ENCODE measurements at regions of chr1 and their contacts with region 1.

Region 1: DNA sequence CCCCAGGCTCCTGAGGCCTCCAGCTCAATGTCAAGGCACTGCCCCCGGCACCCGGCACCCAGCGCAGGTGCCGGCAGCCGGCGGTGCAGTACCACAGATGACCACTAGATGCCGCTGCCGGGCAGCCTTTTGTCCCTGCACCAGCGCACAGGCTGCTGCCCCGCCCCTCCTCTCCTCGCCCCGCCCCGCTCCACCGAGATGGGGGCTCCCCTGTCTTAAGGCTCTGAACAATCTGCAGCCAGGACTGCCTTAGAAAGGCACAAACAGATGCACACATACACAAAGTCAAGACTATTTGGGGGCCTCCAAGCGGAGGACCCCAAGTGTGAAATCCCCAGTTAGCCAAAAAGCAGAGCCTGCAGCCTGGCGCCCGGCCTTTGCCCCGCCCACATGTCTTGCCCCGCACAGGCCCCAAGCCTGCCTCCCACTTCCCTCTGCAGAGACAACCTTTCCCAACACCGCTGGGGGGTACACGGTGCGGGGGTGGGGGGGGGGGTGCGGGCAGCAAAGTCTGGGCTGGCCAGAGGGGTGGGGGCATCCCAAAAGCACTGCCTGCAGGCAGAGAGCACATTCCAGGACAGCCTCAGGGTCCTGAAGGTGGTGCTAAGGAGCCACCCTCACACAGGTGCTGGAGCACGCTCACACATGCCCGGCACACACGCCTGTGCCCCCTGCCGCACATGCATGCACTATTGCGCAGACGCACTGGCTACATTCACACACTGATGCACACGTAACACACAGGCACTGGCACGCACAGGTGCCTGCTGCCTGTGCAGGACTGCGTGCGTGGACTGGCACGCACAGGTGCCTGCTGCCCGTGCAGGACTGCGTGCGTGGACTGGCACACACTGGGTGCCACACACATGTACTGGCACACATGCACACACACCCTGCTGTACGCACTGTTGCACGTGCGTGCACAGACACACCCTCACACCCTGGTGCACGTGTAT is 37.1 kb downstream of the ARHGEF16 start:
- DNase-seq: peak; percentile 76 to 83 (median 78)
- H3K4me3 ChIP-seq: no peak overlapping the region
- H3K4me3 Mint-ChIP-seq: peak overlapping the region in 5 of 8 donors; percentile 9 to 70 (median 52)
- H3K27ac ChIP-seq: no peak overlapping the region
- H3K27ac Mint-ChIP-seq: peak overlapping the region in 4 of 7 donors; percentile 4 to 50 (median 30)
- H3K4me1 ChIP-seq: no peaks in the 10 kb centered on the region
- H3K4me1 Mint-ChIP-seq: peaks cover 3 to 8% (median 6%) of the 10 kb centered on the region in 4 donors
- H3K27me3 ChIP-seq: no peaks in the 10 kb centered on the region
- H3K27me3 Mint-ChIP-seq: no peaks in the 10 kb centered on the region

Region 2: DNA sequence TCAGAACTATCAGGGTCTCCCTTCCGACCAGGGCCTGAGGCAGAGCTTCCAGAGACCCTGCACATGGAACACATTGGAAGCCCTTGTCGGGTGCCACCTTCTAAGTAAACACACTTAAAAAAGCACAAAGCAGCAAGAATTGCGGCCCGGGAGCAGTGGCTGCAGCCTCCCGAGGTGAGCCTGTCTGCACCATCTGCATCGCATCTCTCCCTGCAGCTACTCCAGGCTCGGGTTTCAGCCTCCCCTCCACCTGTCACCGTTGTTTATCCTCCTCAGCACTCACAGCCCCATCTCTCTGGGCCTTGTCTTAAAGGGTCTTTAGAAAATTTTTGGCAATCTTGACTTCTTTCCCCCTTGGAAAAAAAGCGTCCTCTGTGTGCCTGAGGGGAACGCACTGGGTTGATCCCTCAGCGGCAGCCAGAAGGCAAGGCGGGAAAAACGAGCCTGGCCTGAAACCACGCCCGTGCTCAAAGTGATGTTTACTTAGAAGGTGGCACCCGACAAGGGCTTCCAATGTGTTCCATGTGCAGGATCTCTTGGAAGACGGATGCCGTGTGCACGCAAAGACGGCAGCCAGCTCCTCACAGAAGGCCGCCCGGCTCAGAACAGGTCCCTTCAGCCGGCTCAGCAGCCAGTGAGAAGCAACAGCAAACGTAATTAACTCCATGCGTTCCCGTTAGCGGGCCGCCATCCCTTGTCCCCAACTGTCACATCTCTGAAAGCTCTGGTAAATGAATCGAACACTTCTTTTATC is 132.0 kb before region 1 on chr1:
- CTCF ChIA-PET with region 1: no interaction called
- POLR2A ChIA-PET with region 1: no interaction called
- intact Hi-C with region 1: no loop called
- DNase-seq: no peak
- H3K4me3 ChIP-seq: no peak overlapping the region
- H3K4me3 Mint-ChIP-seq: no peak overlapping the region
- H3K27ac ChIP-seq: no peak overlapping the region
- H3K27ac Mint-ChIP-seq: no peak overlapping the region
- H3K4me1 ChIP-seq: no peaks in the 10 kb centered on the region
- H3K4me1 Mint-ChIP-seq: no peaks in the 10 kb centered on the region
- H3K27me3 ChIP-seq: no peaks in the 10 kb centered on the region
- H3K27me3 Mint-ChIP-seq: peaks cover 4 to 8% of the 10 kb centered on the region in 2 donors

Region 3: DNA sequence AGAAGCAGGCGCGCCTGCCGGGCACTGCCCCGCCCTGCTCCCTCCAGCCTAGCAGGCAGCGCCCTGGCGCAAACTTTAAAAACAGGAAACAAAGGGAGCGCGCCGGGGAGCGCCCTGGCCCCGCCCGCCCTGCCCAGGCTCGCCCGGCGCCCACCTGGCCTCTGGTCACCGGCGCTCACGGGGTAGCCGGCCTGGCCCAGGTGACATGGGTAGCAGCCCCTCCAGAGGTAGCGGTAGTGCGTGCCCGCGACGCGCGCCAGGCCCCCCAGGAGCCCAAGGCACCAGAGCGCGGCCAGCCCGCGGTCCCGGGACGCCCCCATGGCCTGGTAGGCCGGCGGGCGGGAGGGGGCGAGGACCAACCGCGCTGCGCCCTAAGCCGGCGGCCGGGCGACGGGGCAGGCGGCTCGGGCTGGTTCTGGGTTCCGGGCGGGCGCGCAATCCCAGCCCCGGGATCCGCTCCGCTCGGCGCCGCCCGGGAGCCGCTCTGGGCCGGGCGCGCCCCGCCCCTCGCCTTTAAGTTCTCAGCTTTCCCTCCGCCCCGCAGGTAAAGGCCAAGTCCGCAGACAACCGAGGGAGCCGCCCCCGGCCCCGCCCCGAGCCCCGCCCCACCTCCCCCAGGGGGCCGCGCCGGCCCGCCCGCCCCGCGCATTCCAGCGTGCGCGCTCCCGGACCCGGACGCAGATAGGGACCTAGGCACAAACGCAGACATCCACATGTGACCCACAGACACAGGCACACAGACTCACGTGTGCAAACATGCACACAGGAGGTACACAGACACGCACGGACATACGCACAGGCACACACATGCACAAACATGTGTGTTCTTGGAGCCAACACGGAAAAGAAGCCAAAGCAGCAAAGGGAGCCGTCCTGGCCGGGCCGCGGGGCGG is 39.6 kb after region 1 on chr1:
- CTCF ChIA-PET with region 1: no interaction called
- POLR2A ChIA-PET with region 1: interaction called, 15 read pairs
- intact Hi-C with region 1: loop called (anchors 2 kb)
- DNase-seq: peak; percentile 77 to 84 (median 81)
- H3K4me3 ChIP-seq: peak overlapping the region; percentile 54 to 85
- H3K4me3 Mint-ChIP-seq: peak overlapping the region; percentile 82 to 94 (median 88)
- H3K27ac ChIP-seq: peak overlapping the region; percentile 54
- H3K27ac Mint-ChIP-seq: peak overlapping the region; percentile 54 to 99 (median 97)
- H3K4me1 ChIP-seq: peaks cover 16% of the 10 kb centered on the region
- H3K4me1 Mint-ChIP-seq: peaks cover 4 to 36% (median 18%) of the 10 kb centered on the region in 4 donors
- H3K27me3 ChIP-seq: no peaks in the 10 kb centered on the region
- H3K27me3 Mint-ChIP-seq: no peaks in the 10 kb centered on the region

Region 4: GRCh38 chr1:3611170-3612019 is 119.8 kb after region 1 on chr1 and contains the start of gene MEGF6:
- CTCF ChIA-PET with region 1: interaction called, 8 read pairs
- POLR2A ChIA-PET with region 1: no interaction called
- intact Hi-C with region 1: loop called (anchors 1 kb)
- DNase-seq: peak in 4 of 5 donors; percentile 20 to 60 (median 26)
- H3K4me3 ChIP-seq: no peak within 1 kb of the TSS
- H3K4me3 Mint-ChIP-seq: peak within 1 kb of the TSS; percentile 39 to 87 (median 77)
- H3K27ac ChIP-seq: no peak within 1 kb of the TSS
- H3K27ac Mint-ChIP-seq: peak within 1 kb of the TSS in 2 of 7 donors; percentile 18 to 25
- H3K4me1 ChIP-seq: peaks cover 15% of the 10 kb centered on the region
- H3K4me1 Mint-ChIP-seq: peaks cover 2 to 18% (median 5%) of the 10 kb centered on the region in 4 donors
- H3K27me3 ChIP-seq: peaks cover 5% of the 10 kb centered on the region
- H3K27me3 Mint-ChIP-seq: peaks cover 9 to 13% of the 10 kb centered on the region in 2 donors
- total RNA-seq, gene MEGF6: 167 to 168 TPM

Measured in CD4-positive, alpha-beta memory T cell (primary cell).